ENCODE measurements at regions of chr10 and their contacts with region 1.

Region 1: GRCh38 chr10:63157845-63158624 is 24.9 kb downstream of the NRBF2 start:
- DNase-seq: peak; percentile 47
- H3K4me3 Mint-ChIP-seq: no peak overlapping the region
- H3K27ac Mint-ChIP-seq: no peak overlapping the region
- H3K4me1 Mint-ChIP-seq: peaks cover 13% of the 10 kb centered on the region
- H3K27me3 Mint-ChIP-seq: no peaks in the 10 kb centered on the region

Region 2: DNA sequence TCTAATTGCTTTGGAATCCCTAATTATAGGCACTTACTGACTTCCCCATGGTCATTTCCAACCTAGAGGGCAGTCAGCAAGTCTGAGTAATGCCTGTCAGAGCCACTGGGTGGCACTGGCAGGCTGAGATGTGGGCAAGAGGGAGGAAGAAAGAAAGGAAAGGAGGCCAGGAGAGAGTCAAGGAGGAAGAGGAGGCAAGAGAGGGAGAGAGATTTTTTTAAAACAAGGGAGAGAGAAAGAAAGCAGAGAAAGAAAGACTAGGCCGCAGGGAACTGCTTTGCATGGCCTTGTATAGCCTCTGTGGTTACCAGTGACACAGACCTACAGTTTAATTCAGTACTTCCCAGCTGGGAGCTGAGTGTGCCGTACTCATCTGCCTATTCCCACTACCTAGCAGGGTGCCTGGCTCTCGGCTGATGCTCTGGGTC is 563.9 kb before region 1 on chr10:
- CTCF ChIA-PET with region 1: interaction called, 26 read pairs
- POLR2A ChIA-PET with region 1: no interaction called
- DNase-seq: peak; percentile 57
- H3K4me3 Mint-ChIP-seq: no peak overlapping the region
- H3K27ac Mint-ChIP-seq: no peak overlapping the region
- H3K4me1 Mint-ChIP-seq: no peaks in the 10 kb centered on the region
- H3K27me3 Mint-ChIP-seq: peaks cover 12% of the 10 kb centered on the region

Region 3: GRCh38 chr10:63083904-63084689 is 73.9 kb before region 1 on chr10:
- CTCF ChIA-PET with region 1: interaction called, 12 read pairs
- POLR2A ChIA-PET with region 1: interaction called, 3 read pairs
- DNase-seq: peak; percentile 37
- H3K4me3 Mint-ChIP-seq: no peak overlapping the region
- H3K27ac Mint-ChIP-seq: no peak overlapping the region
- H3K4me1 Mint-ChIP-seq: no peaks in the 10 kb centered on the region
- H3K27me3 Mint-ChIP-seq: peaks cover 22% of the 10 kb centered on the region

Region 4: GRCh38 chr10:63133056-63133820 is 24.8 kb before region 1 on chr10 and contains the start of gene NRBF2:
- CTCF ChIA-PET with region 1: interaction called, 35 read pairs
- POLR2A ChIA-PET with region 1: interaction called, 8 read pairs
- DNase-seq: peak; percentile 98
- H3K4me3 Mint-ChIP-seq: peak within 1 kb of the TSS; percentile 91
- H3K27ac Mint-ChIP-seq: peak within 1 kb of the TSS; percentile 95
- H3K4me1 Mint-ChIP-seq: peaks cover 35% of the 10 kb centered on the region
- H3K27me3 Mint-ChIP-seq: no peaks in the 10 kb centered on the region
- total RNA-seq, gene NRBF2: 25.1 to 26.8 TPM

Region 5: GRCh38 chr10:63140077-63140476 is 18.0 kb before region 1 on chr10:
- CTCF ChIA-PET with region 1: interaction called, 40 read pairs
- POLR2A ChIA-PET with region 1: interaction called, 8 read pairs
- DNase-seq: no peak
- H3K4me3 Mint-ChIP-seq: no peak overlapping the region
- H3K27ac Mint-ChIP-seq: no peak overlapping the region
- H3K4me1 Mint-ChIP-seq: peaks cover 45% of the 10 kb centered on the region
- H3K27me3 Mint-ChIP-seq: no peaks in the 10 kb centered on the region

Region 6: GRCh38 chr10:63145782-63146181 is 12.3 kb before region 1 on chr10:
- CTCF ChIA-PET with region 1: interaction called, 40 read pairs
- POLR2A ChIA-PET with region 1: no interaction called
- DNase-seq: no peak
- H3K4me3 Mint-ChIP-seq: no peak overlapping the region
- H3K27ac Mint-ChIP-seq: no peak overlapping the region
- H3K4me1 Mint-ChIP-seq: peaks cover 30% of the 10 kb centered on the region
- H3K27me3 Mint-ChIP-seq: no peaks in the 10 kb centered on the region

Region 7: GRCh38 chr10:63720072-63720537 is 562.1 kb after region 1 on chr10:
- CTCF ChIA-PET with region 1: interaction called, 27 read pairs
- POLR2A ChIA-PET with region 1: interaction called, 3 read pairs
- DNase-seq: peak; percentile 47
- H3K4me3 Mint-ChIP-seq: no peak overlapping the region
- H3K27ac Mint-ChIP-seq: no peak overlapping the region
- H3K4me1 Mint-ChIP-seq: peaks cover 28% of the 10 kb centered on the region
- H3K27me3 Mint-ChIP-seq: peaks cover 8% of the 10 kb centered on the region

Measured in activated CD4-positive, alpha-beta memory T cell treated with anti-CD3 and anti-CD28 coated beads, Interleukin-2, amount 10 ng/mL, durations not matched to agents 7 days and 5 days (primary cell).